ENCODE measurements at regions of chr20 and their contacts with region 1.

Region 1: DNA sequence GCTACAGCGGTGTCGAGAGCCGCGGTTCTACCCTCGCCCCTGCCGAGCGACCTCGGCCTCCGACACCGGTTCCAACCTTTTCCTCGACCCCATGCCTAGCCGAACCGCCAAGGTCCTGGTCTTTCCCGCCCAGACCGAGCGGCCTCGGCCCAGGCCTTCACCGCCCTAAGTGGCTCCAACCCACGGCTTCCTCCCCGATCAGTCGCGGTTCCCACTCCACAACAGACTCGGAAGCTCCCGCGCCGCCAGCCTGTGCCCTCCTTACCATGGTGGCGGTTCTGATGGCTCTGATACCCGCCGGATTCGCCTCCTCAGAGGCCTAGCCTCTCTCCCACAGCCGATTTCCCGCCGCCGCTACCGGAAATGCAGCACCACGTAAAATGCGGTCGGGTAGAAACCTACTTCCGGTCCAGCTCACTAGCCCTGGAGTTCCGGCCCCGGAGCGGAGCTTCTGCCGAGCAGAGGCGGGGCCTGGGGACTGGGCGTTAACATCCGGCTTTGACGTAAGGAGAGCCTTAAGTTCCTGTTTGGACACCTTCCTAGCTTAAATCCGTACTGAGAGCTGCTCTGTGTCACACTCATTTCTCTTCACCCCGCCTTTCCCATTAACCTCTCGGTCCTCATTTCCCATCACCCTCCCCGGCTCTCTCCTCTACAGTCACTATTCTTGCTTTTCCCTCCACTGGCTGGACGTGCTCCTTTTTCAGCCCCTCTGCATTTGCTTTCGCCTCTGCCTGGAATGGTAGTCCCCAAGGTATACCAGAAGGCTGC is at the start of gene SNRPB:
- DNase-seq: peak; percentile 98
- H3K4me3 ChIP-seq: peak within 1 kb of the TSS; percentile 73
- H3K4me3 Mint-ChIP-seq: peak within 1 kb of the TSS; percentile 79
- H3K27ac Mint-ChIP-seq: peak within 1 kb of the TSS; percentile 99
- H3K4me1 ChIP-seq: peaks cover 11% of the 10 kb centered on the region
- H3K4me1 Mint-ChIP-seq: peaks cover 14% of the 10 kb centered on the region
- H3K27me3 ChIP-seq: no peaks in the 10 kb centered on the region
- H3K27me3 Mint-ChIP-seq: no peaks in the 10 kb centered on the region
- CTCF ChIP-seq: no peak
- total RNA-seq, gene SNRPB: 532 and 533 TPM in 2 replicates

Region 2: DNA sequence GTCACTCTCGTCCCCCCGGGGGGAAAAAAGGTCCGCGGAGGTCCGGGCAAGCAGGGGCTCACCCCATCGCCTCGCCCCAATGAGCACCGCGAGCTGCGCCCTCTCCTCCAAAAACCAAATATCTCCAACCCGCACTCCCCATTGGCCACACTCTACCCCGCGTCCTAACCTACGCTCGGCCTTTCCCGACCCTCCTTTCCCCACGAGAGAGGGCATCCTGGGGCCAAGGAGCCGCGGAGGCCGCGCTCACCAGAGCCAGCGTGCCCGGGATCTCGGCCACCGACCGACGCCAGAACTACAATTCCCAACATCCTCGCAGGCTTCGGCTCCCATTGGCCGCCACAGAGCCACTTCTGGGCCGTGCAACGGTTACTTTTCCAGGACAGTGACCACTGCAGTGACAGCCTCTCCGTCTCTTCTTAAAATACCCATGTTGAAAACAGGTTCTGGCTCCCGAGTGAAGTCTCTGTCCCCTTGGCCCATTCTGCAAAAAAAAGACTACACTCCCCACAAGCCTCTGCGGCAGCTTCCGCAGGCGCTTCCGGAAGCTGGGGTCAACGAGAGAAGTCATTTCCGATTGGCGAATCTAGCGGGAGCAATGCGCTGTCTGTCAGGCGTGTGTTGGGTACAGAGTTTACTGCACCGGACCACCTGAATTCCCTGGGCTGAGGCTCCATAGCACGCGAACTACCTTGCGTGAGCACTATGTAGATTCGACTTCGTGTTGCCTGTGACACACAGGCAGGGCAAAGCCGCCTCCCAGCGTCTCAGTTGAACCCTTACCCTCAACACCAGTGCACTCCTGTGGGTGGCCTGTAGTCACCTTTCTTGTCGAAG is 38.2 kb after region 1 on chr20 and contains the start of gene ZNF343:
- CTCF ChIA-PET with region 1: interaction called, 3 read pairs
- POLR2A ChIA-PET with region 1: interaction called, 11 read pairs
- intact Hi-C with region 1: loop called (anchors 2 kb)
- DNase-seq: peak; percentile 79 to 84
- H3K4me3 ChIP-seq: peak within 1 kb of the TSS; percentile 90
- H3K4me3 Mint-ChIP-seq: peak within 1 kb of the TSS; percentile 88
- H3K27ac Mint-ChIP-seq: peak within 1 kb of the TSS; percentile 92
- H3K4me1 ChIP-seq: peaks cover 13% of the 10 kb centered on the region
- H3K4me1 Mint-ChIP-seq: peaks cover 10% of the 10 kb centered on the region
- H3K27me3 ChIP-seq: no peaks in the 10 kb centered on the region
- H3K27me3 Mint-ChIP-seq: peaks cover 2% of the 10 kb centered on the region
- CTCF ChIP-seq: no peak
- total RNA-seq, gene ZNF343: 8.0 and 11.0 TPM in 2 replicates

Measured in Caco-2 (cell line).